WTC11 (cell line): ENCODE measurements at regions of chr17 and their contacts with region 1.

Region 1: GRCh38 chr17:56499799-56500388 is 93.6 kb upstream of the NOG start:
- DNase-seq: no peak
- ATAC-seq: no peak
- H3K4me3 Mint-ChIP-seq: no peak overlapping the region
- H3K27ac Mint-ChIP-seq: no peak overlapping the region
- H3K4me1 Mint-ChIP-seq: no peaks in the 10 kb centered on the region
- H3K27me3 Mint-ChIP-seq: no peaks in the 10 kb centered on the region
- CTCF ChIP-seq: peak; percentile 39

Region 2: GRCh38 chr17:56284482-56284881 is 215.4 kb before region 1 on chr17:
- CTCF ChIA-PET with region 1: no interaction called
- POLR2A ChIA-PET with region 1: no interaction called
- DNase-seq: no peak
- ATAC-seq: no peak
- H3K4me3 Mint-ChIP-seq: no peak overlapping the region
- H3K27ac Mint-ChIP-seq: no peak overlapping the region
- H3K4me1 Mint-ChIP-seq: peaks cover 2% of the 10 kb centered on the region
- H3K27me3 Mint-ChIP-seq: no peaks in the 10 kb centered on the region
- CTCF ChIP-seq: no peak

Region 3: GRCh38 chr17:56577843-56578204 is 77.9 kb after region 1 on chr17:
- CTCF ChIA-PET with region 1: interaction called, 21 read pairs
- POLR2A ChIA-PET with region 1: no interaction called
- DNase-seq: no peak
- ATAC-seq: no peak
- H3K4me3 Mint-ChIP-seq: peak overlapping the region; percentile 12; the same call in 1 of the 2 replicates
- H3K27ac Mint-ChIP-seq: no peak overlapping the region
- H3K4me1 Mint-ChIP-seq: peaks cover 23% of the 10 kb centered on the region
- H3K27me3 Mint-ChIP-seq: no peaks in the 10 kb centered on the region
- CTCF ChIP-seq: no peak

Region 4: DNA sequence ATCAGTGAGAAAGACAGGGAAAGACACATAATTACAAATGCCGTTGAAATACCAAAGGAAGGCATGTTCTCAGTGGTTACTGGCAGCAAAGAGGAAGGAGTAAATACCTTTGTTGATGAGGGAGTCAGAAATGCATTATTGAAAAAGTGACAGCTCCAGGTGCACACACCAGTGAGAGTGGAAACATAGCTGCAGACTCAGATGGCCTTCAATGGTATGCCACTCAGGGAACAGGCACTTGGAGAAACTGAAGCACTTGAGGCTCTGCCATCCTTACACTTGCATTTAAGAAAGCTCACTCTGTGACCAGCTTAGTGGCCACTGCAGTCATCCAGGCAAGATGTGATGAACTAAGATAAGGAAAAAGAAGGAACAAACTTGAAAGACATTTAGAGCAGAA is 123.5 kb after region 1 on chr17:
- CTCF ChIA-PET with region 1: no interaction called
- POLR2A ChIA-PET with region 1: no interaction called
- DNase-seq: no peak
- ATAC-seq: no peak
- H3K4me3 Mint-ChIP-seq: no peak overlapping the region
- H3K27ac Mint-ChIP-seq: no peak overlapping the region
- H3K4me1 Mint-ChIP-seq: peaks cover 25% of the 10 kb centered on the region
- H3K27me3 Mint-ChIP-seq: no peaks in the 10 kb centered on the region
- CTCF ChIP-seq: no peak

Region 5: DNA sequence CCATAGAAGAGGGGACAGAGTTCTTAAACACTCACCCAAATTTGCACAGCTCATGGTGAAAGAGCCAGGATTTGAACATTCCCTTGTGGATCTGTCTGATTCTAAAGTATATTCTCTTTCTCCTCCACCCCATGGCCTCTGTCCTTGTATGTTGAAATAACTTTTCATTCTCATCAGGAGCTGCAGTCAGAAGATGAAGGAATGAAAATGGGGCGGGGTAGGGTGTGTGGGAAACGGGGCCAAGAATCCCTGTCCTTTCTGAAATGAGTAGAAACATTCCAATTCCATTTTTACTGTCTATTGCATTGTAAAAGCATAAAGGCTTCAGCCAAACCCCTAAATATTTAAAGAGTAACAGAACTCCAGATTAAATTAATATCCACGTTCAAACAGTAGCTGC is 136.4 kb after region 1 on chr17:
- CTCF ChIA-PET with region 1: interaction called, 10 read pairs
- POLR2A ChIA-PET with region 1: no interaction called
- DNase-seq: no peak
- ATAC-seq: no peak
- H3K4me3 Mint-ChIP-seq: no peak overlapping the region
- H3K27ac Mint-ChIP-seq: no peak overlapping the region
- H3K4me1 Mint-ChIP-seq: peaks cover 3% of the 10 kb centered on the region; the same call in 1 of the 2 replicates
- H3K27me3 Mint-ChIP-seq: no peaks in the 10 kb centered on the region
- CTCF ChIP-seq: no peak

Region 6: DNA sequence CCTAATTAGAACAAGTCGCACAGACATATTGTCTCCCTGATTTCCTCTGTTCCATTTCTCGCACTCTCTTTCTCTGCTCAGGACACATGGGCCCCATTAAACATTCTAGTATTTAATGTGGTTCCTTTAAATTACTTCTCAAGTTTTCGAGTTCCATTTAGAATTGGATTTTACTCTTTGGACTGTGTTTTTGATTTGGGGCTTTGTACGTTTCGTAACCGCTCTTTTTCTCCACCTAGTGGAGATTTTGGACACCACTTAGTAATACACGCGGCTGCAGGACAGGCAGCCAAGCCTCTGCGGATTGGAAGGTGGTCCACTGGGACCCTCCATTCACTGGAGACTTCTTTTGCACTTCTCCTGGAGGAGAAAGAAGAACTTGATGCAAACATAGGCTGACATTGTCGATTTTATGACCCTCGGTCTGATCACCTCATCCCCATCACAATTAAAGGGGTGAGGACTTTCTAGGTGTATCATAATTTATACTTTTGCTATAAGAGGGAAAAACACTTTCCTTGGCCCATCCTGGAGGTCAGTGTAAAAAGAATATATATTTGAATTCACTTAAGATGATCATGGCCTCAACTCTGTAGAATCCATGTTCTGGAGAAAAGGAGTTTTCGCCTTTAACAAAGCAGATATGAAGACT is 179.3 kb after region 1 on chr17:
- CTCF ChIA-PET with region 1: interaction called, 21 read pairs
- POLR2A ChIA-PET with region 1: no interaction called
- DNase-seq: no peak
- ATAC-seq: peak; percentile 75
- H3K4me3 Mint-ChIP-seq: peak overlapping the region; percentile 85
- H3K27ac Mint-ChIP-seq: no peak overlapping the region
- H3K4me1 Mint-ChIP-seq: peaks cover 9% of the 10 kb centered on the region
- H3K27me3 Mint-ChIP-seq: no peaks in the 10 kb centered on the region; the same call in 1 of the 2 replicates
- CTCF ChIP-seq: peak; percentile 41; the same call in 1 of the 2 replicates